WTC11 (cell line): ENCODE measurements at regions of chr2 and their contacts with region 1.

Region 1: GRCh38 chr2:132547074-132547687 is 122.8 kb downstream of the LYPD1 start:
- DNase-seq: peak; percentile 69
- ATAC-seq: peak; percentile 60
- H3K4me3 Mint-ChIP-seq: no peak overlapping the region
- H3K27ac Mint-ChIP-seq: no peak overlapping the region
- H3K4me1 Mint-ChIP-seq: peaks cover 24% of the 10 kb centered on the region
- H3K27me3 Mint-ChIP-seq: peaks cover 3% of the 10 kb centered on the region; the same call in 1 of the 2 replicates
- CTCF ChIP-seq: peak; percentile 72

Region 2: GRCh38 chr2:132477962-132478361 is 69.2 kb before region 1 on chr2:
- CTCF ChIA-PET with region 1: no interaction called
- POLR2A ChIA-PET with region 1: no interaction called
- DNase-seq: no peak
- ATAC-seq: no peak
- H3K4me3 Mint-ChIP-seq: no peak overlapping the region
- H3K27ac Mint-ChIP-seq: no peak overlapping the region
- H3K4me1 Mint-ChIP-seq: peaks cover 6% of the 10 kb centered on the region
- H3K27me3 Mint-ChIP-seq: no peaks in the 10 kb centered on the region; the same call in 1 of the 2 replicates
- CTCF ChIP-seq: no peak

Region 3: DNA sequence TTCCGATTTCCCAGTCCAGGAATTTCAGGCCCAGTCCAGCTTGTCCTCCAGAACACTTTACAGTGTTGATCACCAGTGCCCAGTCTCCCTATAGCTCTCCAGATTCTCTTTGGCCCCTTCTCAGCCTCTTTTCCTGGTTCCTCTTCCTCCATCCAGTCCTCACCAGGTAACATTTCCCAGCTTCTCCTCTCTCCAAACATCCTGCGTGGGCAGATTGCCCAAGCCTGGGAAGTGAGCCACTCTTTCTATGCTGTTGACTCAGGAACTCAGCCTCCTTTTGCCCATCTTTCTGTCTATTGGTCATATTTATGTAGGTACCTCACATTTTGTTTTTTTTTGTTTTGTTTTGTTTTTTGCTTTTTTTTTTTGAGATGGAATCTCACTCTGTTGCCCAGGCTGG is 13.4 kb after region 1 on chr2:
- CTCF ChIA-PET with region 1: interaction called, 37 read pairs
- POLR2A ChIA-PET with region 1: no interaction called
- DNase-seq: no peak
- ATAC-seq: no peak
- H3K4me3 Mint-ChIP-seq: no peak overlapping the region
- H3K27ac Mint-ChIP-seq: no peak overlapping the region
- H3K4me1 Mint-ChIP-seq: peaks cover 11% of the 10 kb centered on the region
- H3K27me3 Mint-ChIP-seq: no peaks in the 10 kb centered on the region; the same call in 1 of the 2 replicates
- CTCF ChIP-seq: no peak

Region 4: GRCh38 chr2:132651115-132652045 is 104.2 kb after region 1 on chr2:
- CTCF ChIA-PET with region 1: interaction called, 19 read pairs
- POLR2A ChIA-PET with region 1: no interaction called
- DNase-seq: peak; percentile 34
- ATAC-seq: peak; percentile 91
- H3K4me3 Mint-ChIP-seq: no peak overlapping the region
- H3K27ac Mint-ChIP-seq: no peak overlapping the region
- H3K4me1 Mint-ChIP-seq: peaks cover 6% of the 10 kb centered on the region
- H3K27me3 Mint-ChIP-seq: no peaks in the 10 kb centered on the region
- CTCF ChIP-seq: peak; percentile 50

Region 5: GRCh38 chr2:132911726-132912724 is 364.8 kb after region 1 on chr2:
- CTCF ChIA-PET with region 1: interaction called, 14 read pairs
- POLR2A ChIA-PET with region 1: no interaction called
- DNase-seq: peak; percentile 38
- ATAC-seq: peak; percentile 99
- H3K4me3 Mint-ChIP-seq: no peak overlapping the region
- H3K27ac Mint-ChIP-seq: no peak overlapping the region
- H3K4me1 Mint-ChIP-seq: peaks cover 6% of the 10 kb centered on the region
- H3K27me3 Mint-ChIP-seq: no peaks in the 10 kb centered on the region
- CTCF ChIP-seq: no peak